HCT116 (cell line): ENCODE measurements at regions of chr4 and their contacts with region 1.

Region 1: DNA sequence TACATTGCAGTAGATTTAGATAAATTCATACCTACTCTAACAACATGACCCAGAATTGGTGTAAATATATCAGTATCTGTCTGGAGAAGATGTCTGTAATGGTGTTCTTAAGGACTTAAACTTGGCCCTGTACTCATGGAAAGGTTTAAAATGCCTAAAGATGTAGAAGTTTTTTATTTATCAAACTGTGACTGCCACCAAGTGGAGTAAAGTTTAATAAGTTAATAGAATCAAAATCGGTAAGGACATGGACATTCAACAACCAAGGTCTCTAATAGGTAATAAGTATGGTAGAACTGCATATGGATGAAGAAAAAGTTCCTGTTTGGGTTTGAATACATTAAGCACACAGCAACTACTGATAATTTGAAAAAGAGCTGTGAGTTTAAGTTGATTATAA is 474.0 kb upstream of the NDST3 start:
- DNase-seq: peak; percentile 7
- ATAC-seq: 0 out of 2 replicates have a peak, but pooled peaks have one; percentile 25
- H3K4me3 ChIP-seq: no peak overlapping the region
- H3K27ac ChIP-seq: no peak overlapping the region
- H3K4me1 ChIP-seq: no peaks in the 10 kb centered on the region
- H3K27me3 ChIP-seq: no peaks in the 10 kb centered on the region
- CTCF ChIP-seq: peak; percentile 5 to 40 (median 15); a peak in 4 of 6 replicates
- POLR2A ChIP-seq: no peak
- RAD21 ChIP-seq: peak; percentile 57

Region 2: GRCh38 chr4:117623326-117623725 is 63.0 kb after region 1 on chr4:
- CTCF ChIA-PET with region 1: no interaction called
- POLR2A ChIA-PET with region 1: no interaction called
- RAD21 ChIA-PET with region 1: no interaction called
- intact Hi-C with region 1: no loop called
- DNase-seq: no peak
- ATAC-seq: no peak
- H3K4me3 ChIP-seq: no peak overlapping the region
- H3K27ac ChIP-seq: no peak overlapping the region
- H3K4me1 ChIP-seq: no peaks in the 10 kb centered on the region
- H3K27me3 ChIP-seq: no peaks in the 10 kb centered on the region
- CTCF ChIP-seq: no peak
- POLR2A ChIP-seq: no peak
- RAD21 ChIP-seq: no peak

Region 3: GRCh38 chr4:118034053-118034785 is 473.9 kb after region 1 on chr4 and contains the start of gene NDST3:
- CTCF ChIA-PET with region 1: no interaction called
- POLR2A ChIA-PET with region 1: no interaction called
- RAD21 ChIA-PET with region 1: no interaction called
- intact Hi-C with region 1: loop called (anchors 2 kb)
- DNase-seq: peak; percentile 71
- ATAC-seq: peak; percentile 70
- H3K4me3 ChIP-seq: peak within 1 kb of the TSS; percentile 55 to 65
- H3K27ac ChIP-seq: peak within 1 kb of the TSS; percentile 56; the same call in 1 of the 2 replicates
- H3K4me1 ChIP-seq: peaks cover 5 to 12% of the 10 kb centered on the region in 2 experiments
- H3K27me3 ChIP-seq: no peaks in the 10 kb centered on the region
- CTCF ChIP-seq: peak; percentile 57 to 73 (median 63); a peak in 5 of 6 replicates
- POLR2A ChIP-seq: no peak
- RAD21 ChIP-seq: peak; percentile 91
- total RNA-seq, gene NDST3: not detected